HEK293 (cell line): ENCODE measurements at regions of chr17 and their contacts with region 1.

Region 1: DNA sequence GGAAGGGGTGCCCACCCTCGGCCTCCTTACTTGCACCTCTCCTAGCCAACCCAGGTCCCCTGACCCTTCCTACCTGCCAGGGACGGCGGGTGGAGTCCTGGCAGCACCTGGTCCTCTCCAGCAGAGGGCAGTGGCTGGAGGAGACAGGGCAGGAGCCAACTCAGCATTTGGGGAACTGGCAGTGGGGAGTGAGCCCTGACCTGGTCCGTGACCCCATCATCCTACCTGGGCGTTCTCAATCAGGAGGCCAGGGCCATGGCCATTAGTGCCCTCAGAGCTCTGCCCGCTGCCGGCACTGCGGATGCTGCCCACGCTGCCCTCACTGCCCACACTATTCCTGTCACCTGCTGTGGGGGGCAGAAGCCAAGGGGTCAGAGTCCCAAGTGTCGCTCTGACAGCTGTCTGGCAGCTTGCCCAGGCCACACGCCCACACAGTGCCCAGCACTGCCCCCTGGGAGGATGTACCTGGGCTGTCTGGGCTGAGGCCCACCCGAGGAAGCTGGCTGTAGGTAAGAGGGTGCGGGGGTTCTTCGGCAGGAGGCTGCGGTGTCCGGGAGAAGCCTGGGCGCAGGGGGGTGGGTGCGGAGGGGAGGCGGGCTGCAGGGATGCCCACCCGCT is 10.9 kb downstream of the CASKIN2 start:
- H3K4me3 ChIP-seq: no peak overlapping the region
- H3K27ac ChIP-seq: no peak overlapping the region
- H3K4me1 ChIP-seq: no peaks in the 10 kb centered on the region
- CTCF ChIP-seq: peak; percentile 73

Region 2: DNA sequence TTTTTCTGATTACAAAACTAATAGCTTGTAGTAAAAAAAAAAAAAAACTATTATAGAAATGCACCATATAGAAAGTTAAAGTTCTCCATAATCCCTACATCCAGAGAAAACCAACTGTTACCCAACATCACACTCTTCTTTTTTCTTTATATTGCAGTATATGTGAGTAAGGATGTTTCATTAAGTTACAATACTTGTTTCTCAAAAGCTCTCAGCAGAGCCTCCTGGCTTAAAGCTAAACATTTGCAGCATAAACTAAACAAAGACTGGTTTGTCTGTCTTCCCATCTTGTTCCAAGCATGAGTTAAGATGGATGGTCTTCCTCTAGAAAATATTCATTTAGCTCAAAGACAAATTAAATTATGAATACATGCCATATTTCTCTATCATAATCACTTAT is 124.1 kb before region 1 on chr17:
- CTCF ChIA-PET with region 1: no interaction called
- POLR2A ChIA-PET with region 1: no interaction called
- H3K4me3 ChIP-seq: no peak overlapping the region
- H3K27ac ChIP-seq: no peak overlapping the region
- H3K4me1 ChIP-seq: peaks cover 7% of the 10 kb centered on the region
- CTCF ChIP-seq: no peak

Region 3: DNA sequence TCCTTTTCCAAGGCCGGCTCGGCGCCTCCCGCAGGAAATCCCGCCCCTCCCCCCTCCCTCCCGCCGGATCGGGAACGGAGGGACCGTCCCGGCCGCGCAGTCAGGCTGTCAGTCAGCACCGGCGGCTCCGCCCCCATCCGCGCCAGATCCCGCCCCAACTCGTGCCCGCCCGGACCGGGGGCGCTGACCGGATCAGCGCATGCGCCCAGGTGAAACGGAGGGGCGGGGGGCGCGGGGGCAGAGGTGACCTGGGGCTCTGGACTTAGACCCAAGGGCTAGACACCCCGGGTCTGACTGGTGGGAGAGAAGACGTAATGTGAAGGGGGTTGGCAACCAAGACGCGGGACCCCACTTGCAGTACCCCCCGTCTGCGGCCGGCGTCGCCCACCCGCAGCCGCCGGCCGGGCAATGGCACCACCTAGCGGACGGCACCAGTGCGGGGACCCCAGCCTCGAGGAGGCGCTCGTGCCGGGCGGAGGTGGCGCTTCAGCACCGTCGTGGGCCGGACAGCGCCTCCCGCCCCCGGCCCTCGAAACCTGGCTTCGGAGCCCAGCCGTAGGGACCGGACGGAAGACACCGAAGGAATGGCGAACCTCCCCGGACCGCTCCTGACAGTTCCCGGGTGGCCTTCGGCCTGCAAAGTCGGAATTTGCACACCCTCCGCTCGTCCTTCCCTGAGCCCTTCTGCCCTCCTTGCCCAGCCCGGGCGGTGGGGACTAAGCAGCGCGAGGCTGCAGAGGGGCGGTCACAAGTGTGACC is 11.2 kb after region 1 on chr17 and contains the start of gene CASKIN2:
- CTCF ChIA-PET with region 1: interaction called, 20 read pairs
- POLR2A ChIA-PET with region 1: interaction called, 5 read pairs
- H3K4me3 ChIP-seq: peak within 1 kb of the TSS; percentile 87
- H3K27ac ChIP-seq: peak within 1 kb of the TSS; percentile 71; the same call in 1 of the 2 replicates
- H3K4me1 ChIP-seq: no peaks in the 10 kb centered on the region
- CTCF ChIP-seq: peak; percentile 100

Region 4: GRCh38 chr17:75524953-75525719 is 20.7 kb after region 1 on chr17 and contains the start of gene LLGL2:
- CTCF ChIA-PET with region 1: interaction called, 3 read pairs
- POLR2A ChIA-PET with region 1: interaction called, 10 read pairs
- H3K4me3 ChIP-seq: peak within 1 kb of the TSS; percentile 55
- H3K27ac ChIP-seq: peak within 1 kb of the TSS; percentile 61
- H3K4me1 ChIP-seq: peaks cover 5% of the 10 kb centered on the region
- CTCF ChIP-seq: peak; percentile 96

Region 5: DNA sequence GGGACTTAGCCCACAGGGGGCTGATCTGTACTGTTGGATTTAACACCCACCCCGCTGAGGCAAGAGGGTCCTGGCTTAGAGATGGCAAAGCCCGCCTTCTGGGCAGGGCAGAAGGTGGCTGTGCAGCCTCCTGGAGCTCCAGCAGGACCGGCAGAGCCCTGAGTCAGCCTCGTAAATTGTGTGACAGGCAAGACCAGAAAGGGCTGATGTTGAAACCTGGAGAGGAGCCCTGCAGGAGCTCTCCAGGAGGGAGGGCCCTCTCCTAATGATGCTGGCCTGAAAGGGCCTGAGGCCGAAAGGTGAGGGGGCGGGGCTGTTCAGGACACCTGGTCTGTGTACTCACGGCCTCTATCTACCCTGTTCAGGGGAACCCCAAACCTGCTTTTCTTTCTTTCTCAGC is 60.6 kb after region 1 on chr17:
- CTCF ChIA-PET with region 1: no interaction called
- POLR2A ChIA-PET with region 1: no interaction called
- H3K4me3 ChIP-seq: no peak overlapping the region
- H3K27ac ChIP-seq: no peak overlapping the region
- H3K4me1 ChIP-seq: no peaks in the 10 kb centered on the region
- CTCF ChIP-seq: no peak

Region 6: GRCh38 chr17:75668489-75668888 is 164.0 kb after region 1 on chr17:
- CTCF ChIA-PET with region 1: no interaction called
- POLR2A ChIA-PET with region 1: no interaction called
- H3K4me3 ChIP-seq: peak overlapping the region; percentile 95; the same call in 1 of the 2 replicates
- H3K27ac ChIP-seq: no peak overlapping the region
- H3K4me1 ChIP-seq: peaks cover 10% of the 10 kb centered on the region; the same call in 1 of the 2 replicates
- CTCF ChIP-seq: no peak